Left ventricle myocardium superior (tissue), 1 donor: ENCODE measurements at regions of chr12 and their contacts with region 1.

Region 1: GRCh38 chr12:111024205-111024801 is 103.9 kb upstream of the MYL2 start:
- DNase-seq: peak; percentile 74
- ATAC-seq: peak; percentile 90

Region 2: GRCh38 chr12:111304642-111305071 is 280.4 kb after region 1 on chr12:
- intact Hi-C with region 1: loop called (anchors 5 kb)
- DNase-seq: no peak
- ATAC-seq: no peak

Region 3: GRCh38 chr12:111741235-111741812 is 717.0 kb after region 1 on chr12:
- intact Hi-C with region 1: no loop called
- DNase-seq: no peak
- ATAC-seq: peak; percentile 83